H1 (cell line): ENCODE measurements at regions of chr5 and their contacts with region 1.

Region 1: GRCh38 chr5:43040287-43041098 is at the start of gene ANXA2R:
- DNase-seq: peak in 1 of 2 experiments; percentile 88
- H3K4me3 ChIP-seq: peak within 1 kb of the TSS in 2 of 4 experiments; percentile 7 to 57; a peak in 3 of 8 replicates
- H3K27ac ChIP-seq: no peak within 1 kb of the TSS
- H3K4me1 ChIP-seq: peaks cover 9 to 29% (median 14%) of the 10 kb centered on the region in 4 experiments
- H3K27me3 ChIP-seq: peaks cover 76 to 95% (median 91%) of the 10 kb centered on the region in 4 experiments
- CTCF ChIP-seq: peak; percentile 66 to 85 (median 83)
- EP300 ChIP-seq: no peak
- POLR2A ChIP-seq: no peak
- RAD21 ChIP-seq: peak; percentile 60 to 69
- total RNA-seq, gene ANXA2R: 0.17 and 0.29 TPM in 2 replicates

Region 2: DNA sequence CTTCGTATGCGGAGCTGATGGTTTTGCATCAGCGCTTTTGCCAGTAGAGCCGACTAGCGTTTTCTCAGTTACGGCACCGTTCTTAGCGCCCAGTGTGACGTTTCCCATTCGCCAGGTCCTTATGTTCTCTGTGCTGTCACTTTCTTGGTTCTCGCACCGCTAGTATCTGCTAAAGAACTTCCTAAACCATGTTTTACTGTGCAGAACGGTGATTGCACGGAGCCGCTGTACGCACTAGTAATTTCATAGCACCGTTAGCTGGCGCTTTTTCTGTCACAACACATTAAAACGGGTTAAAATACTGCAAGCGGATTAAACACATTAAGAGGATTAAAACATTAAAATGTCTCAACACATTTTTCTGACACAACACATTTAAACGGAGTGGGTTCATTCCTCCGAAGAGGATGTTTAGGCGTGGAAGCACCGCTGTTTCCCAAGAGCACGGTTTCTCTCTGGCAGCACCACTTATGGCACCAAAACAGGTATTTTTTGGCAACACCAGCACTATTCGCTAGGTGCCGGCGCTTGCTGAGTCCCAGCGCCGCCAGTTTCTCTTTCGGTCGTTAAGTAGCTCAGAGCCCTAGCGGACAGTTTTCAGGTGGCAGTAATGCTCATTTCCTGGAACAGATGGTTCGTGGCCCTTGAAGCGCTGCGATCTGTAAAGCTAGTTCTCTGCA is 20.7 kb before region 1 on chr5:
- CTCF ChIA-PET with region 1: interaction called, 25 read pairs
- POLR2A ChIA-PET with region 1: interaction called, 17 read pairs
- DNase-seq: no peak
- H3K4me3 ChIP-seq: peak overlapping the region in 1 of 4 experiments; percentile 16; a peak in 1 of 8 replicates
- H3K27ac ChIP-seq: no peak overlapping the region
- H3K4me1 ChIP-seq: peaks cover 4 to 23% (median 12%) of the 10 kb centered on the region in 4 experiments; a peak in 6 of 7 replicates
- H3K27me3 ChIP-seq: peaks cover 49 to 97% (median 86%) of the 10 kb centered on the region in 4 experiments
- CTCF ChIP-seq: peak; percentile 37 to 71 (median 53)
- EP300 ChIP-seq: no peak
- POLR2A ChIP-seq: no peak
- RAD21 ChIP-seq: peak in 1 of 2 experiments; percentile 29; a peak in 2 of 4 replicates

Region 3: DNA sequence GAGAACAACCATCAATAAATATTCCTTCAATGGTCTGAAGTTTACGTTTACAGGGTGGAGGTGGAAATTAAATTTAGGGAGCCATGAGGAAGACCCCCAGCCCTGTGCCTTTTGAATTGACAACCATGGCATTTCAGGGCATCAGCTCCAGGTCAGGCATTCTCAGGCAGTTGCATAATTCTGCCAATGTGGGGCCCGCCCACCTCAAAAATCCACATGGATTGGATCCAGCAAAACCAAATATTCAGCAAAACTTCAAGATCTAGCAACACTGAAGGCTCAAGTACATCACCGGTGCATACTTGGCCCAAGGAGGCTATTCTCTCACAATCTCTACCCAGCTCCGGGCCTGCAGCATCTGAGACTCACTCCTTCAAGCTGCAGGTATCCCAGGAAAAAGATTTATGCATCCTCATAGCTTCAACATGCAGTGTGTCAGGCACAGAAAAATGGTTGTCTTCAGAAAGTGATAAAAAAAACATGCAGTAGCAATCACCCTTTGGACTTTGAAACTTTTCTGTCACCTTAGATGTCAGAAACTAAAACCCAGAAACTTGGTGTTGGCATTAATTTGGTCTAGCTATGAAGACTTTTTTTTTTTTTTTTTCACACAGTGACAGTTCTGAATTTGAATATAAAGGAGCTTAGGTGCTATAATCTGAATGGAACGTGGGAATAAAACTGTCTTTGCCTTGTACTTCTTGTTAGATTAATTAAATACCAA is 21.0 kb after region 1 on chr5:
- CTCF ChIA-PET with region 1: interaction called, 17 read pairs
- POLR2A ChIA-PET with region 1: interaction called, 10 read pairs
- DNase-seq: no peak
- H3K4me3 ChIP-seq: no peak overlapping the region
- H3K27ac ChIP-seq: no peak overlapping the region
- H3K4me1 ChIP-seq: peaks cover 3 to 4% (median 3%) of the 10 kb centered on the region in 4 experiments
- H3K27me3 ChIP-seq: peaks cover 0 to 3% (median 0%) of the 10 kb centered on the region in 4 experiments; a peak in 1 of 7 replicates
- CTCF ChIP-seq: no peak
- EP300 ChIP-seq: no peak
- POLR2A ChIP-seq: no peak
- RAD21 ChIP-seq: no peak

Region 4: GRCh38 chr5:43066799-43067741 is 26.6 kb after region 1 on chr5:
- CTCF ChIA-PET with region 1: interaction called, 17 read pairs
- POLR2A ChIA-PET with region 1: interaction called, 10 read pairs
- DNase-seq: peak in 1 of 2 experiments; percentile 94
- H3K4me3 ChIP-seq: peak overlapping the region; percentile 79 to 97 (median 84)
- H3K27ac ChIP-seq: peak overlapping the region; percentile 83
- H3K4me1 ChIP-seq: peaks cover 3 to 7% (median 3%) of the 10 kb centered on the region in 4 experiments
- H3K27me3 ChIP-seq: peaks cover 0 to 3% (median 0%) of the 10 kb centered on the region in 4 experiments; a peak in 1 of 7 replicates
- CTCF ChIP-seq: no peak
- EP300 ChIP-seq: peak; percentile 62 to 99; a peak in 2 of 3 replicates
- POLR2A ChIP-seq: peak; percentile 62 to 84
- RAD21 ChIP-seq: no peak